ENCODE measurements at regions of chr3 and their contacts with region 1.

Region 1: GRCh38 chr3:183884427-183885296 is at the start of gene PARL:
- DNase-seq: peak; percentile 96 to 97
- ATAC-seq: peak; percentile 99 to 100 (median 100)
- H3K4me3 ChIP-seq: peak within 1 kb of the TSS; percentile 79 to 99 (median 90)
- H3K27ac ChIP-seq: peak within 1 kb of the TSS in 9 of 10 donors; percentile 75 to 95 (median 84)
- H3K4me1 ChIP-seq: peaks cover 0 to 41% (median 25%) of the 10 kb centered on the region in 9 donors
- H3K27me3 ChIP-seq: no peaks in the 10 kb centered on the region
- CTCF ChIP-seq: peak; percentile 84 to 99 (median 96)
- total RNA-seq, gene PARL: 52.7 to 70.6 (median 60.7) TPM

Region 2: DNA sequence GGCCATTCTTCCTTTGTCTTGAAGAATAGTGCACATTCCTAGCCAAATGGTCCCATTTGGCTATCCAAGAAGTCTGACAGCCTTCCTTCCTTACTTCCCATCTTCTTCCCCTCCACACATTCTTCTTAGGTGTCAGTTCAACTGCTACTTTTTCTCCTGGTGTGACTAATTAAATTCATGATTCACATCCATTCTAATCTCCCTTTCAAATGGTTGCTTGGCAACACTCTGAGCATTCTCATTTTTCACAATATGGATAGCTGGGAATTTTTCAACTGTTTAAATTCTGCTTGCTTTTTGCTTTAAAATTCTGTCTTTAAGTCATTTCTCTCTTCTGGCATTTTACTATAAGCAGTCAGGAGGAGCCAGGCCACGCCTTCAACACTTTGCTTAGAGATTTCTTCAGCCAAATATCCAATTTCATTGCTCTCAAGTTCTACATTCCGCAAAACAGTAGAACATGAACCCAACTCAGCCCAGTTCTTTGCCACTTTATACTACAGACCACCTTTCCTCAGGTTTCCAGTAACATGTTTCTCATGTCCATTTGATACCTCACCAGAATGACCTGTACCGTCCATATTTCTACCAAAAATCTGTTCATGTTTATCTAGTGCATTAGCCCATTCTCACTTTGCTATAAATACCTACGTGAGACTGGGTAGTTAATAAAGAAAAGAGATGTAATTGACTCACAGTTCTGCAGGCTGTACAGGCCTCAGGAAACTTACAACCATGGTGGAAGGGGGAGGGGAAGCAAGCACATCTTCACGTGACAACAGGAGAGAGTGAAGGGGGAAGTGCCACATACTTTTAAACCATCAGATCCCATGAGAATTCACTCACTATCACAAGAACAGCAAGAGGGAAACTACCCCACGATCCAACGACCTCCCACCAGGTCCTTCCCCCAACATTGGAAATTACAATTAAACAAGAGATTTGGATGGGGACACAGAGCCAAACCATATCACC is 424.3 kb before region 1 on chr3:
- intact Hi-C with region 1: loop called in 1 of 10 experiments (anchors 10 kb)
- DNase-seq: no peak
- ATAC-seq: no peak
- H3K4me3 ChIP-seq: no peak overlapping the region
- H3K27ac ChIP-seq: no peak overlapping the region
- H3K4me1 ChIP-seq: no peaks in the 10 kb centered on the region
- H3K27me3 ChIP-seq: no peaks in the 10 kb centered on the region
- CTCF ChIP-seq: no peak

Region 3: GRCh38 chr3:183468424-183468823 is 416.2 kb before region 1 on chr3:
- intact Hi-C with region 1: loop called in 2 of 10 experiments (anchors 2 to 10 kb)
- DNase-seq: no peak
- ATAC-seq: peak in 1 of 8 donors; percentile 45
- H3K4me3 ChIP-seq: no peak overlapping the region
- H3K27ac ChIP-seq: no peak overlapping the region
- H3K4me1 ChIP-seq: peaks cover 0 to 15% (median 3%) of the 10 kb centered on the region in 9 donors
- H3K27me3 ChIP-seq: no peaks in the 10 kb centered on the region
- CTCF ChIP-seq: no peak

Region 4: DNA sequence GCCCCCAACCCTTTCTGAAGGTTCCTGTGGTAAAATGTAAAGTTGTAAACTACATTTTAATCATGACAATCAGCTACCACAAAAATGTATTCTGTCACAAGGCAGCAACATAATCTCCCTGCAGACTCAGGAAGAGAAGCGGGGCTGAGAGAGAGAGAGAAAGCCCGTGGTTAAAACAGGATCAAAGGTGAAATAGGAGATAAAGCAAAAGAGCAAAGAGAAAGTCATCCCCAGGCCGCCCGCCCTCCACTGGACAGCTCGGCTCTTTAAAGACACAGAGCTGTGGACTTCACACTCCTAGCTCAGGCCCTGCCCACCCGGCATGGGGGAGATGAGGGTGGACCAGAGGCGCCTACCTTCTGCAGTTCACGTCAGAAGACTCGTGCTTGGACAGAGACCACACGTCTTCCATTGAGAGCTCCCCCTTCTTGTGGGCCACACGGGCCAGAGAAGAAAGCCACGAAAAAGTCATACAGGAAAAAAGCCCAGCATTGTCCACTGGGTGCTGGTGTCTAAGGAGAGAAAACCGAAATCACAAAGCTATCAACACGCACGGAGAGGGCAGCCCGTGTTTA is 103.6 kb after region 1 on chr3:
- intact Hi-C with region 1: no loop called
- DNase-seq: no peak
- ATAC-seq: peak in 1 of 8 donors; percentile 12
- H3K4me3 ChIP-seq: no peak overlapping the region
- H3K27ac ChIP-seq: no peak overlapping the region
- H3K4me1 ChIP-seq: peaks cover 0 to 6% (median 0%) of the 10 kb centered on the region in 9 donors
- H3K27me3 ChIP-seq: no peaks in the 10 kb centered on the region
- CTCF ChIP-seq: no peak

Measured in heart right ventricle (tissue), 16 donors.